Aorta (tissue), 5 donors: ENCODE measurements at regions of chr15 and their contacts with region 1.

Region 1: DNA sequence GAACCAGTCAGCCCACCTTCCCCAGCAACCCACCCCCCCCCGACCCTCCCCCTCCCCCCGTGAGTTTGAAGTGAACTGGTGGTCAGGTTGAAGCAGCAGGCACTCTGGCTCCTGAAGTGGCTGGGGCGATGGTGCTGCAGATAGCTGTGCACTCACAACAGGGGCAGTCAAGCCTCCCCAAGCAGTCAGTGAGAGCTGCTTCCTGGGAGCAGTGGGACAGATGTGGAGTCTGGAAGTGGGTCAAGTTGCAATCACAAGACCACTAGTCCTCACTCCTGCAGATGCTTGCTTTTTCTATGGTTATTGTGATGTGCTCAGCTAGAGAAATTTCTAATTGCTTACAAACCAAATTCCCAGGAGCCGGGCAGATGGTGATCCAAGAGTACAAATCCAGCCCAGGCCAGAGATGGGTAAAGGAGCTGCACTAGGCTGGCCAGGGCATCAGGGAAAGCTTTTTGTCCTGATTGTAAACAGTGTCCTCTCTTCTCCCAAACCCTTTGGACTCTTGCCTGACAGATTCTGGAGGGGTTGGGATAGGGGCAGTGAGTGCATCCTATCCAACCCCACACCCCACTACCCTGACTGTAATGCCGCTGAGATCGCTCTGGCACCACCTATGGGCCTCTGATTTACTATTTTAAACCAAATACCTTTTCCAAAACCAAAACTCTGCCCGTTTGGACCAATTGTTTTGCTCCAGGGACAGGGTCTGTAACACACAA is 9.8 kb upstream of the CLPX start:
- DNase-seq: no peak
- ATAC-seq: peak; percentile 20
- H3K4me3 ChIP-seq: no peak overlapping the region
- H3K27ac ChIP-seq: no peak overlapping the region
- H3K4me1 ChIP-seq: no peaks in the 10 kb centered on the region
- H3K27me3 ChIP-seq: no peaks in the 10 kb centered on the region

Region 2: DNA sequence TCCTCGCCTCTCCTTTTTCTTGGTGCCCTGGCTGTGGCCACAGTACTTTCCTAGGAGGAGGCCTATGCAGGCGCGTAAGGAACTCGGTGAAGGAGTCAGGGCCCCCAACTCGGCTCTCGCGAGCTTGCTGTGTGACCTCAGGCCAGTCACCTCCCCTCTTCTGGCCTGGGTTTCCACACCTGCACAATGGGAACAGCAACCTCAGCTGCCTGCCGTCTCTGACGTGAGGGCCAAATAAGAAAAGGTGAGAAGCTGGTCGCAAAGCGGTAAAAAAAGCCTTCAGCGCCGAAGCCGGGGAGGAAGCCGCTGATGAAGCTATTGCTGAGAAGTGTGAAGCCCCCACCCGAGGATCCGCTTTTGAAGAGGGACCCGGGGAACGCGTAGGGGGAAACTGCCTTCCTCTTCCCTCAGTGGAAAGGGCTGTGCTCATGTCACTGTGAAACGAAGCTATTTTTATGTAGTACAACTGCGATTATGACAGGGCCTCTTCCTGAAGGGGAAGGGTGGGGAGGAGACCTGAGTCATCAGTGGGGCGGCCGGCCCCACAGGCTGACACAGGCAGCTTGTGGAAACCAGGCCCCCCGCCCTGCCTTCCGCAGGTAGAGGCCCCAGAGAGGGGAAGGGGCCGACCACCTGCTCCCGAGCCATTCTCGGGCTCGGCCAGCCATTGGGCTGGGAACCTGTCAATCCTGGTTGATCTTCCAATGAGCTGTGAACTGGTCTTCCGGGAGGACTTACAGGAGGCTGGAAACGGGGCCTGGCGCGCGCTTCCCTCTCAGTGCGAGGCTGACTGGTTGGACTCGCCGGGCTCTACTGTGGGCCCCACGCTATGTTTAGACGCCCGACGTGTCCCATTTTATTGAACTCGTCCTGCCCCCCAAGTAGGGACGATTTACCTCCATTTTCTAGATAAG is 301.2 kb before region 1 on chr15:
- intact Hi-C with region 1: no loop called
- DNase-seq: peak; percentile 96
- ATAC-seq: peak; percentile 91
- H3K4me3 ChIP-seq: no peak overlapping the region
- H3K27ac ChIP-seq: peak overlapping the region in 1 of 2 donors; percentile 6
- H3K4me1 ChIP-seq: peaks cover 0 to 2% of the 10 kb centered on the region in 2 donors
- H3K27me3 ChIP-seq: no peaks in the 10 kb centered on the region

Region 3: DNA sequence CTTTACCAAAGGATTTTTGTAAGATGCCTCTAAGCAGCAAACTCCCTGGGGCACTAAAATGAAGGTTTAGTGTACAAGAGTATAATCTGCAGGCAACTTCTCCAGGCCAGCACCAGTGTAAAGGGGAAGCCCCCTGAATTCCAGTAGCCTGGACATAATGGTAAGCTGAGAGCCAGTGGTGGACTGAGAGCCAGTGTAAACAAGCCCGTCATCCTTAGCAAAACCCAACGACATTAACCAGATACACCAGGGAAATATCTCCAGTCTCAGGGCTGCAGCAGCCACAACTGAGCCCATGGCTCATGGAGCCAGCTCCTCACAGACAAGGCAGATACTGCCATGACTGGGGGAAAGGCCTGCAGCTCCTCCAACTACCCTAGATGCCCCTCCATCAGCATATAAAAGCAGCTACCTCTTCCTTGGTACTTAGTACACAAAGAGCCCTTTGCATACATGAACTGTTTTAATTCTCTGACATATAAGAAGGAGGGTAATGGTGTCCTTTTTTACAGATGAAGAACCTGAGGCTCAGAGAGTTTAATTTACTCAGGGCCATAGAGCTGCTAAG is 70.0 kb after region 1 on chr15:
- intact Hi-C with region 1: loop called in 1 of 2 experiments (anchors 5 kb)
- DNase-seq: no peak
- ATAC-seq: no peak
- H3K4me3 ChIP-seq: no peak overlapping the region
- H3K27ac ChIP-seq: no peak overlapping the region
- H3K4me1 ChIP-seq: no peaks in the 10 kb centered on the region
- H3K27me3 ChIP-seq: no peaks in the 10 kb centered on the region